ENCODE measurements at regions of chr7 and their contacts with region 1.

Region 1: DNA sequence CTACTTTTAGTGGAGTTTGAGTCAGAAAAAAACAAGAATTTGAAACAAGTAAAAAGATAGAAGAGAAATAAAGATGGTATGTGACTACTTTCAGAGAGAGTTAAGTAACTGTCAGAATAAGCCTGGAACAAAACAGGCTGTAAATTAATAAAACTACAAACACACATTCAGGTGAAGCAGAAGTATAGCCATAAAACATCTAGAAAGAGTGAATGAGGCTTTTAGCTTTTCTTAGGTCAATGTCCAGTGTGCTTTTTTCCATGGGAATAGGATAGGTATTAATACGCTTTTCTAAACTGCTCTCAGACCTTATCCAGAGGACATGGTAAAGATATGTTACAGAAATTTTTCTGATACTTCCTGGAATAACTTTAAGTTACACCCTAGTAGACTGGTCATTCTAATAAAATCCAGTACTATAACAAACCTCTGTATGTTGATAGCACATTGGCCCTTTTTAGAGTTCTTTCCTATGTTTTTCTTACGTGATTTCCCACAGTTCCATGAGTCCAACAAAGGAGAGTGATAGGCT is 23.3 kb downstream of the TMEM106B start:
- DNase-seq: no peak
- ATAC-seq: no peak
- H3K4me3 ChIP-seq: no peak overlapping the region
- H3K4me3 Mint-ChIP-seq: no peak overlapping the region
- H3K27ac ChIP-seq: no peak overlapping the region
- H3K27ac Mint-ChIP-seq: no peak overlapping the region
- H3K4me1 ChIP-seq: no peaks in the 10 kb centered on the region
- H3K4me1 Mint-ChIP-seq: peaks cover 0 to 18% (median 9%) of the 10 kb centered on the region in 7 donors
- H3K27me3 ChIP-seq: no peaks in the 10 kb centered on the region
- H3K27me3 Mint-ChIP-seq: no peaks in the 10 kb centered on the region

Region 2: GRCh38 chr7:11817111-11817740 is 417.2 kb before region 1 on chr7:
- CTCF ChIA-PET with region 1: no interaction called
- POLR2A ChIA-PET with region 1: no interaction called
- intact Hi-C with region 1: no loop called
- DNase-seq: no peak
- ATAC-seq: no peak
- H3K4me3 ChIP-seq: no peak overlapping the region
- H3K4me3 Mint-ChIP-seq: no peak overlapping the region
- H3K27ac ChIP-seq: no peak overlapping the region
- H3K27ac Mint-ChIP-seq: no peak overlapping the region
- H3K4me1 ChIP-seq: no peaks in the 10 kb centered on the region
- H3K4me1 Mint-ChIP-seq: no peaks in the 10 kb centered on the region
- H3K27me3 ChIP-seq: no peaks in the 10 kb centered on the region
- H3K27me3 Mint-ChIP-seq: no peaks in the 10 kb centered on the region

Region 3: DNA sequence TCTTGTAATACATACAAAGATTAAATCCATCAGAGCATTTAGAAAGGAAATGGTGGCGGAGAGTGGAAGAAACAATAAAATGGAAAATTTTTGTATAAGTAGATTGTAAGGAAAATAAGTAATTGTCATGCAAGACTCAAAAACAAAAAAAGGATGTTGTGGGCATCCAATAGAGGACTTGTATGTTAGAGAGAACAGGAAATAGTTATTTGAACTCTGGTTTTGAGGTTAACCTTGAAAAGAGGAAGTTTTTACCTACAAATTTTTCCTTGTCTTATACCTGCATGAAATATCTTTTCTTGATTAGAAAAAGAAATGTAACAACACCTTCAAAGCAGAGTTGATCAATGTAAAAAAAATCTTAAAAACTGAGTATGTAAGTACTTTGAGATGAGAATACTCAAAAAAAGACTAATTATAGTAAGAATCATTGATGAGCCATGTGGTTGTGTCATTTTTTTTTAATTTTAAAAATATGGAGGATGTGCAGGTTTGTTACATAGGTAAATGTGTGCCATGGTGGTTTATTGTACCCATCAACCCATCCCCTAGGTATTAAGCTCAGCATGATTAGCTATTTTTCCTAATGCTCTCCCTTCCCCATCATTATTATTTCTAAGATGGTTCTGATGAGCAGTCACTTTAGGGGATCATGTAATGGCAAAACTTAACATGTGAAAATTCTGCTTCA is 11.4 kb before region 1 on chr7:
- CTCF ChIA-PET with region 1: interaction called, 3 read pairs
- POLR2A ChIA-PET with region 1: no interaction called
- intact Hi-C with region 1: loop called in 1 of 2 experiments (anchors 1 kb)
- DNase-seq: peak in 7 of 9 donors; percentile 41 to 72 (median 61)
- ATAC-seq: peak; percentile 87
- H3K4me3 ChIP-seq: no peak overlapping the region
- H3K4me3 Mint-ChIP-seq: peak overlapping the region; percentile 51 to 79 (median 66)
- H3K27ac ChIP-seq: peak overlapping the region; percentile 29
- H3K27ac Mint-ChIP-seq: peak overlapping the region; percentile 64 to 87 (median 84)
- H3K4me1 ChIP-seq: peaks cover 18 to 31% of the 10 kb centered on the region in 2 donors
- H3K4me1 Mint-ChIP-seq: peaks cover 30 to 88% (median 78%) of the 10 kb centered on the region in 7 donors
- H3K27me3 ChIP-seq: no peaks in the 10 kb centered on the region
- H3K27me3 Mint-ChIP-seq: no peaks in the 10 kb centered on the region

Region 4: DNA sequence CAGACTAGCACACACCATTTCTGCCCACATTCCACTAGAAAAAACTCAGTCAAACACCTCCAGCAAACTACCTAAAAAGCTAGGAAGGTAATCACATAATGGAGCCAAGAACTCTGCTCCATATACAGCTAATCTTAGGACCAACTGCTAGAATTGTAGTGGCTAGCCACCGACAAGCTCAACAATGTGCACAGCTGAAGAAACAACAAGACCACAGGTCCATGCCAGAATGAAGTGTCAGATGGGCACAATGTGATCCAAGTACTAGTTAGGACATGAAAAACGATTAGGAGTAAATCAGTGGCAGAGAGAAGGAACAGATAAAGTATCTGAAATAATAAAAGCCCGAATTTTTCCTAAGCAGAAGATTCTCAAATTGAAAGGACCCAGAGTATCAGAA is 15.3 kb after region 1 on chr7:
- CTCF ChIA-PET with region 1: interaction called, 4 read pairs
- POLR2A ChIA-PET with region 1: interaction called, 4 read pairs
- intact Hi-C with region 1: loop called in 1 of 2 experiments (anchors 1 kb)
- DNase-seq: no peak
- ATAC-seq: no peak
- H3K4me3 ChIP-seq: no peak overlapping the region
- H3K4me3 Mint-ChIP-seq: no peak overlapping the region
- H3K27ac ChIP-seq: no peak overlapping the region
- H3K27ac Mint-ChIP-seq: no peak overlapping the region
- H3K4me1 ChIP-seq: no peaks in the 10 kb centered on the region
- H3K4me1 Mint-ChIP-seq: peaks cover 0 to 4% (median 0%) of the 10 kb centered on the region in 7 donors
- H3K27me3 ChIP-seq: no peaks in the 10 kb centered on the region
- H3K27me3 Mint-ChIP-seq: peaks cover 0 to 26% (median 0%) of the 10 kb centered on the region in 5 donors

Region 5: DNA sequence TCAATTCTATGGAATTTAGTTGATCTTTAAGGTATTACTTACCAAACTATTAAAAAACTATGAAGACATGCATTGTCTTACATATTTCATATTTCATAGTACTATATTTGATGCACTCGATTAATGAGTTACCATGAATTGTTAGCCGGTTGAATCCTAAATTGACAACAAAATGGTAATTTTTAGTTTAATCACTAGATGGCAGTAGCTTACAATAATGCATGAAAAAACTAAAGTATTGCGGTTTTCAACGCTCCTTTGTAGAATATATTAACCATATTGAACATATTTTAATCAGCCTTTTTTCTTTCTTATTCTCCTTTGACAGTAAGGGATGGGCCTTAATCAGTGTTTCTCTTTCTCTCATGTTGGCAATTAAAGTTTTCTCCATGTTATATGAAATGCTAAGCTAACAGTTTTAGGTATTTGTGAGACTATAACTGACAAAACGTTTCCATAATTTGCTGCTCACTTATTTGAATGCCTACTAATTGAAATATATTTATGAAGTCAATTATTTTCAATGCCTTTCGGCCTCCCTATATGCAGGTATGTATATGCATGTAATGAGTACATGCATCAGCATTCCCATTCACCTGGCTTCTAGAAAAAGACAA is 404.6 kb after region 1 on chr7:
- CTCF ChIA-PET with region 1: no interaction called
- POLR2A ChIA-PET with region 1: no interaction called
- intact Hi-C with region 1: no loop called
- DNase-seq: peak in 6 of 9 donors; percentile 26 to 62 (median 54)
- ATAC-seq: peak; percentile 71
- H3K4me3 ChIP-seq: no peak overlapping the region
- H3K4me3 Mint-ChIP-seq: peak overlapping the region in 1 of 10 donors; percentile 50
- H3K27ac ChIP-seq: no peak overlapping the region
- H3K27ac Mint-ChIP-seq: no peak overlapping the region
- H3K4me1 ChIP-seq: peaks cover 0 to 7% of the 10 kb centered on the region in 2 donors
- H3K4me1 Mint-ChIP-seq: peaks cover 11 to 31% (median 23%) of the 10 kb centered on the region in 7 donors
- H3K27me3 ChIP-seq: no peaks in the 10 kb centered on the region
- H3K27me3 Mint-ChIP-seq: peaks cover 0 to 10% (median 0%) of the 10 kb centered on the region in 5 donors

Measured in naive thymus-derived CD4-positive, alpha-beta T cell (primary cell).